CD4-positive, alpha-beta memory T cell (primary cell): ENCODE measurements at regions of chr19 and their contacts with region 1.

Region 1: DNA sequence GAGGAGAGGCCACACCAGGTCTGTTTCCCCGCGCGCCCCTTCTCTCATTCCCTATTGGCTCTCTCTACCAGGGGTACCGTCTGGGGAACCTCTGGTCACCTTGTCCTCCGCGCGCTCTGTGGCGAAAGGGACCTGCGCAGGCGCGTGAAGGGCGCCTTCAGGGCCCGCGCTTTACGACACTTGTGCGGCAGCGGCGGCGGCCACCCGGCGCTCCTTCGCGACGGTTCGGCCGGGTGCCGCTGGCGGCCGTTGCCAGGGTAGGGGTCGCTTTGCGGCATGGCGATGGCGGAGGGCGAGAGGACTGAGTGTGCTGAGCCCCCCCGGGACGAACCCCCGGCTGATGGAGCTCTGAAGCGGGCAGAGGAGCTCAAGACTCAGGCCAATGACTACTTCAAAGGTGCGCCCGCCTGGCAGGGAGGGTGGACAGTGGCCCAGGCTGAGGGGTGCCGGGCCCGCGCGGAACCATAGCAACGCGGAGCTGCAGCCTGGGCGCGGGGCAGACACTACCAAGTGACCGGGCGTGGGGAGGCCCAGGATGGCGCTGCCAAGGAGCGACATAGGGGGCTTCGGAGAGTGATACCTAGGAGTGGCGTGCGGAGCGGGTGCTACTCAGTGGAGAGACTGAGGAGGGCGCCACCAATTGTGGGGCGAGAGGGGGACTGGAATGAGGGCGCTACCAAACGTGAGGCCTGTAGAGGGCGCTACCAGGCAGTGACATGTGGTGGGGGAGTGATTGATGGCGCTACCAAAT is at the start of gene PPP5C:
- DNase-seq: peak; percentile 81 to 86 (median 85)
- H3K4me3 ChIP-seq: peak within 1 kb of the TSS; percentile 74 to 100
- H3K4me3 Mint-ChIP-seq: peak within 1 kb of the TSS; percentile 90 to 96 (median 94)
- H3K27ac ChIP-seq: peak within 1 kb of the TSS; percentile 72
- H3K27ac Mint-ChIP-seq: peak within 1 kb of the TSS; percentile 82 to 96 (median 92)
- H3K4me1 ChIP-seq: peaks cover 47% of the 10 kb centered on the region
- H3K4me1 Mint-ChIP-seq: peaks cover 39 to 66% (median 52%) of the 10 kb centered on the region in 4 donors
- H3K27me3 ChIP-seq: no peaks in the 10 kb centered on the region
- H3K27me3 Mint-ChIP-seq: no peaks in the 10 kb centered on the region
- total RNA-seq, gene PPP5C: 36.9 to 38.5 TPM

Region 2: DNA sequence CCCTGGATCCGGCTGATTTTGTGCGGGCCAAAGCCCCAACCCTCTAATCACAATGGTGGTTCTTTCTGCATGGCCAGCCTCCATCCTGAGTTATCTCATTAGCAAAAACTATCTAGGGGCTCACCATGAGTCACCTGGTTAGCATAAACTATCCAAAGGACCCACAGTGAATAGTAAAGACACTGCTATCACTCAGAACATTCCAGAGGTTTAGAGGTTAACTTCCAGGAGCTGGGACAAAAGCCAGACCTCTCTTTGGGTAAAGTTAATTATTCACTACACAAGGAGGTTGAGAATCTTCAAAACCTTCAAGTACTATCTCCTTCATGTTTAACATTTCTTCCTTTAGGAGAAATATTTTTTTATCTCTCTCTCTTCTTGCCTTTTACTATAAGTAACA is 18.9 kb before region 1 on chr19:
- CTCF ChIA-PET with region 1: no interaction called
- POLR2A ChIA-PET with region 1: no interaction called
- intact Hi-C with region 1: no loop called
- DNase-seq: no peak
- H3K4me3 ChIP-seq: no peak overlapping the region
- H3K4me3 Mint-ChIP-seq: no peak overlapping the region
- H3K27ac ChIP-seq: no peak overlapping the region
- H3K27ac Mint-ChIP-seq: no peak overlapping the region
- H3K4me1 ChIP-seq: no peaks in the 10 kb centered on the region
- H3K4me1 Mint-ChIP-seq: peaks cover 0 to 1% (median 0%) of the 10 kb centered on the region in 4 donors
- H3K27me3 ChIP-seq: no peaks in the 10 kb centered on the region
- H3K27me3 Mint-ChIP-seq: peaks cover 0 to 12% of the 10 kb centered on the region in 2 donors

Region 3: DNA sequence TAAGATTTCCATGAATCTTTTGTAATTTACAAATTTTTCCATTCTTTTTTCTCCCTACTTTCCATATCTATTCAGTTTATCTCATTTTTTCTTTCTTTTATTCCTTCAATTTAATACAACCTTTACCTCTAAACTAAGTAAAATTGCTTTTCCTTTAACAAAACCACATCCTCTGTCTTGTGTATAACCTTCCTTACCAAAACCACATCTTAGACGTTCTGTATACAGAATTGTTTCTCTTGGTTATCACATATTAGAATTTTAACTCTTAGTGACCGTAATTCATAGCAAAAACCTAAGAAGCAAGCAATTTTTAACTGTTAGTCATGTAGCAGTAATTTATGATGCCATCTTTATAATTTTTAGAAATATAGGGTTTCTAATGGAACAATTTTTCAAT is 14.9 kb after region 1 on chr19:
- CTCF ChIA-PET with region 1: interaction called, 7 read pairs
- POLR2A ChIA-PET with region 1: interaction called, 4 read pairs
- intact Hi-C with region 1: loop called (anchors 1 kb)
- DNase-seq: peak in 4 of 5 donors; percentile 62 to 74 (median 69)
- H3K4me3 ChIP-seq: peak overlapping the region in 1 of 2 donors; percentile 29
- H3K4me3 Mint-ChIP-seq: peak overlapping the region; percentile 74 to 94 (median 84)
- H3K27ac ChIP-seq: no peak overlapping the region
- H3K27ac Mint-ChIP-seq: peak overlapping the region in 4 of 7 donors; percentile 2 to 54 (median 43)
- H3K4me1 ChIP-seq: peaks cover 26% of the 10 kb centered on the region
- H3K4me1 Mint-ChIP-seq: peaks cover 18 to 60% (median 41%) of the 10 kb centered on the region in 4 donors
- H3K27me3 ChIP-seq: no peaks in the 10 kb centered on the region
- H3K27me3 Mint-ChIP-seq: no peaks in the 10 kb centered on the region

Region 4: GRCh38 chr19:46392243-46392801 is 45.3 kb after region 1 on chr19:
- CTCF ChIA-PET with region 1: interaction called, 9 read pairs
- POLR2A ChIA-PET with region 1: no interaction called
- intact Hi-C with region 1: loop called (anchors 1 kb)
- DNase-seq: no peak
- H3K4me3 ChIP-seq: no peak overlapping the region
- H3K4me3 Mint-ChIP-seq: no peak overlapping the region
- H3K27ac ChIP-seq: no peak overlapping the region
- H3K27ac Mint-ChIP-seq: peak overlapping the region in 2 of 7 donors; percentile 46 to 64
- H3K4me1 ChIP-seq: no peaks in the 10 kb centered on the region
- H3K4me1 Mint-ChIP-seq: peaks cover 3 to 10% (median 4%) of the 10 kb centered on the region in 4 donors
- H3K27me3 ChIP-seq: no peaks in the 10 kb centered on the region
- H3K27me3 Mint-ChIP-seq: peaks cover 0 to 2% of the 10 kb centered on the region in 2 donors

Region 5: GRCh38 chr19:46513461-46514236 is 166.7 kb after region 1 on chr19:
- CTCF ChIA-PET with region 1: no interaction called
- POLR2A ChIA-PET with region 1: no interaction called
- intact Hi-C with region 1: no loop called
- DNase-seq: peak in 4 of 5 donors; percentile 64 to 72 (median 68)
- H3K4me3 ChIP-seq: no peak overlapping the region
- H3K4me3 Mint-ChIP-seq: no peak overlapping the region
- H3K27ac ChIP-seq: no peak overlapping the region
- H3K27ac Mint-ChIP-seq: no peak overlapping the region
- H3K4me1 ChIP-seq: peaks cover 10% of the 10 kb centered on the region
- H3K4me1 Mint-ChIP-seq: peaks cover 7 to 19% (median 10%) of the 10 kb centered on the region in 4 donors
- H3K27me3 ChIP-seq: peaks cover 3% of the 10 kb centered on the region
- H3K27me3 Mint-ChIP-seq: peaks cover 14 to 20% of the 10 kb centered on the region in 2 donors